Activated naive CD8-positive, alpha-beta T cell treated with anti-CD3 and anti-CD28 coated beads, Interleukin-2, amount 10 ng/mL, durations not matched to agents 7 days and 5 days (primary cell): ENCODE measurements at regions of chr3 and their contacts with region 1.

Region 1: GRCh38 chr3:100254168-100254777 is 6.5 kb upstream of the TBC1D23 start:
- DNase-seq: peak; percentile 41
- ATAC-seq: peak; percentile 94
- H3K4me3 Mint-ChIP-seq: no peak overlapping the region
- H3K27ac Mint-ChIP-seq: peak overlapping the region; percentile 57
- H3K4me1 Mint-ChIP-seq: peaks cover 24% of the 10 kb centered on the region
- H3K27me3 Mint-ChIP-seq: no peaks in the 10 kb centered on the region

Region 2: DNA sequence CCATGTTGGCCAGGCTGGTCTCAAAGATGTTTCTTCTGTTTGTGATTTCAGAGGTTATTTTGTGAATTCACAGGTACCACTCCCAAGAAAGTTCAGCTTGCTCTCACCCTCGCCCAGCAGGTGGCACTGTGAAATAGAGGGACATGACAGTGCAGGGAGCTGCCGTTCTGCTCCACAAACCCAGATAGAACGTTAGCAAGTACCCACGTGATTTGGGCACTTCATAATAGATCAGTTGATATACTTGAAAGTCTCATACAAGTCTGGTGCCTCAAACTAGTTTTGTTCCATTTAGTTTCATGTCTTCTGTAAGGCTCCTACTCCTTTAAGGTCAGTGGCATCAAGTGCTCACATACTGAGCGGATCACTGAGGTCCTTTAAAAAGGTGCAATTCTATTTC is 185.4 kb before region 1 on chr3:
- POLR2A ChIA-PET with region 1: interaction called, 13 read pairs
- DNase-seq: peak; percentile 79
- ATAC-seq: peak; percentile 59
- H3K4me3 Mint-ChIP-seq: peak overlapping the region; percentile 45
- H3K27ac Mint-ChIP-seq: peak overlapping the region; percentile 75
- H3K4me1 Mint-ChIP-seq: peaks cover 48% of the 10 kb centered on the region
- H3K27me3 Mint-ChIP-seq: no peaks in the 10 kb centered on the region

Region 3: DNA sequence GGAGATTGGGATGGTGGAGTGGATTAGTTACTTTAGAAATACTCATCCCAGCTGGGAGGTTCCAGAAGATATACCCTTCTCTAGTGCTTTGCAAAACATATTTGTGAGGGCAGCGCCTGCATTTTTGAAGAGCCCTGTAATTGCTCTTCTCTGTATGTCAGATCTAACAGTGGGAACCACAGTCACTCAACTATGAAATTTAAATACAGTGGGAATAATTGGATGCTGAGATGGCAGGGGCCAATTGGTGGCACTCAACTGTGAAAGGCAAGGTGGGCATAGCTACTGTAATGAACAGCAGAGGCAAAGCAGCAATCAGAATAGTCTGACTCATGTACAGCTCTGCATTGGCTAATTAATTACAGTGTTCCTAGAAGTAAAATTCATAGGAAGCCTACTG is 15.7 kb before region 1 on chr3:
- POLR2A ChIA-PET with region 1: no interaction called
- DNase-seq: no peak
- ATAC-seq: no peak
- H3K4me3 Mint-ChIP-seq: no peak overlapping the region
- H3K27ac Mint-ChIP-seq: no peak overlapping the region
- H3K4me1 Mint-ChIP-seq: no peaks in the 10 kb centered on the region
- H3K27me3 Mint-ChIP-seq: peaks cover 14% of the 10 kb centered on the region

Region 4: DNA sequence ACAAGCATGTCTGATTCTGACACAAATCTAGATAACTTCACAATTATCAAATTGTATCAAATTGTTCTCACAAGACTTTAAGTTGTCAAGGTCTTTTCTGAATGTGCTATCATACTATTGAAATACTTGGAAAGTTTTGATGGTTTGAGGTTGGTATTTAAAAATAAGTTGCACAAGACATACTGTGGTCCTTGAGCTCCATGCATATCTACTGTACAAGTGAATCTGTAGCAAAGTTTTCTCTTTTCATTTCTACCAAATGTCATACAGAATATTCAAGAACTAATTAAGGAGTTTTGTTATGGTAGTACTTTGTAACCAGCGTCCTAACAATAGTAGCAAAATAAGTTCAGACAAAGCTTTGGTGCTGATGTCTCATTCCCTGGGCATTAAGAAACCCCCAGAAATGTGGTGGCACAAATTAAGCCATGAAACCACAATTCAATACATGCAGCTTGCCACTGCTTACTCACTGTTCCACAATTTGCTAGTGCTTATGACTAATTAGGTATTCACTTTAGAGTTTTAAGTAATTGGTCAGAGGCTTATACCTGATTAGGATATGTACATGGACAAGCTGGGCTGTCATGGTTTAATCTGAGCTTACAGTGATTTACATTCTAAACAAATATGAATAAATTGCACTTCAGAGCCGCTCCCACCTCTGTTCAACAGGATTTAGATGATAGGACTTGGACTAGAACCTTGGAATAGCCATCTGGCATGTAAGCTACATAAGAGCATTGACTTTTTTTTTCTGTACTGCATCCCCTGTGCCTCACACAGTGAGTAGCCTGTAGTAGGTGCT is 15.3 kb after region 1 on chr3:
- POLR2A ChIA-PET with region 1: no interaction called
- DNase-seq: no peak
- ATAC-seq: no peak
- H3K4me3 Mint-ChIP-seq: no peak overlapping the region
- H3K27ac Mint-ChIP-seq: no peak overlapping the region
- H3K4me1 Mint-ChIP-seq: peaks cover 4% of the 10 kb centered on the region
- H3K27me3 Mint-ChIP-seq: no peaks in the 10 kb centered on the region